Esophagus muscularis mucosa (tissue), 4 donors: ENCODE measurements at regions of chr3 and their contacts with region 1.

Region 1: GRCh38 chr3:61561374-61562041 is at the start of gene PTPRG:
- DNase-seq: peak; percentile 95
- H3K4me3 ChIP-seq: peak within 1 kb of the TSS; percentile 63 to 89 (median 86)
- H3K27ac ChIP-seq: peak within 1 kb of the TSS; percentile 90 to 96 (median 94)
- H3K4me1 ChIP-seq: peaks cover 18 to 39% (median 35%) of the 10 kb centered on the region in 4 donors
- H3K27me3 ChIP-seq: no peaks in the 10 kb centered on the region
- CTCF ChIP-seq: no peak
- EP300 ChIP-seq: no peak
- POLR2A ChIP-seq: no peak
- total RNA-seq, gene PTPRG: 51.9 to 56.8 (median 54.4) TPM

Region 2: GRCh38 chr3:60973316-60973715 is 588.2 kb before region 1 on chr3:
- intact Hi-C with region 1: no loop called
- DNase-seq: no peak
- H3K4me3 ChIP-seq: no peak overlapping the region
- H3K27ac ChIP-seq: no peak overlapping the region
- H3K4me1 ChIP-seq: no peaks in the 10 kb centered on the region
- H3K27me3 ChIP-seq: no peaks in the 10 kb centered on the region
- CTCF ChIP-seq: no peak
- EP300 ChIP-seq: no peak
- POLR2A ChIP-seq: no peak

Region 3: GRCh38 chr3:61251174-61251972 is 310.1 kb before region 1 on chr3 and contains the start of gene FHIT:
- intact Hi-C with region 1: loop called (anchors 10 kb)
- DNase-seq: peak; percentile 98
- H3K4me3 ChIP-seq: peak within 1 kb of the TSS; percentile 72 to 87 (median 77)
- H3K27ac ChIP-seq: peak within 1 kb of the TSS; percentile 65 to 80 (median 80)
- H3K4me1 ChIP-seq: peaks cover 12 to 19% (median 15%) of the 10 kb centered on the region in 4 donors
- H3K27me3 ChIP-seq: no peaks in the 10 kb centered on the region
- CTCF ChIP-seq: peak in 1 of 3 experiments; percentile 11
- EP300 ChIP-seq: no peak
- POLR2A ChIP-seq: no peak
- total RNA-seq, gene FHIT: 4.6 to 6.1 (median 5.7) TPM

Region 4: DNA sequence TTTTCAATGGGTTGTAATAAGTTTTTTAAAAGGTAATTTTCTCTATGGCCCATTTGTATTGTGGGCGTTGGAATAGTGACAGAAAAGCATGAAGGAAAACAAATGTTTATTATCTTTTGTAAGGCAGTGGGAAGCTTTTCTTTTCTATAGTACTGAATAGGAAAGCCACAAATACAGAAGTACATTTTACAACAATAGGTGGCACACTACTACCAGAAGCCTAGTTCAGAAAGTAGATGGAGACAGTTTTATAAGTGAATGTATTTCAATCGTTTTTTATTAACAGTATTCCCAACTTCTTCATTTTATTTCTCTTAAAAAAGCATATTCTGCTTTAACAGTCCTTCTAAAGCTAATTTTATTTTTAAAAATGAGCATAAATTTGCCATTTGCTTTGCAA is 296.5 kb after region 1 on chr3:
- intact Hi-C with region 1: loop called (anchors 10 kb)
- DNase-seq: no peak
- H3K4me3 ChIP-seq: no peak overlapping the region
- H3K27ac ChIP-seq: no peak overlapping the region
- H3K4me1 ChIP-seq: peaks cover 7 to 36% (median 16%) of the 10 kb centered on the region in 4 donors
- H3K27me3 ChIP-seq: no peaks in the 10 kb centered on the region
- CTCF ChIP-seq: peak; percentile 52 to 62 (median 54)
- EP300 ChIP-seq: no peak
- POLR2A ChIP-seq: no peak

Region 5: DNA sequence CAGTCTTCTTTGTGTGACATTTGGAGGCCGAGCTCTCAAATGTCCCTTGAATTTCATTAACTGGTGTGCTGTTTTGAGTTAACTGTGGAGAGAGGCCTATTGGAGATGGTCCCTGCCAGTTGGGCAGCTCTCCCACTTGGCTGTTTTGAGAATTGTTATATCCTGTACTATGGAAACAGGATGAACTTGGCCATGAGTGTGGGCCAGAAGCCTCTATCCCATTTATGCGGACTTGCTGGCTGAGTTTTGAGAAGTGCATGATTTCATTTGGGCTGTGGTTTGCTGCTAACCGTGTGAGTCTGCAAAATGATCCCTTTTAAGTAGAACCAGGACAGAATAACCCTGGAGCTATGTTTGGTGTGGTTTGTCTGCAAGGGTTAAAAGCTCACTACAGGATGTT is 365.8 kb after region 1 on chr3:
- intact Hi-C with region 1: loop called (anchors 10 kb)
- DNase-seq: peak; percentile 93
- H3K4me3 ChIP-seq: peak overlapping the region in 1 of 4 donors; percentile 6
- H3K27ac ChIP-seq: peak overlapping the region; percentile 69 to 76 (median 74)
- H3K4me1 ChIP-seq: peaks cover 52 to 70% (median 64%) of the 10 kb centered on the region in 4 donors
- H3K27me3 ChIP-seq: no peaks in the 10 kb centered on the region
- CTCF ChIP-seq: no peak
- EP300 ChIP-seq: no peak
- POLR2A ChIP-seq: no peak

Region 6: GRCh38 chr3:62188681-62189383 is 627.3 kb after region 1 on chr3:
- intact Hi-C with region 1: loop called (anchors 5 kb)
- DNase-seq: no peak
- H3K4me3 ChIP-seq: peak overlapping the region in 2 of 4 donors; percentile 14 to 29
- H3K27ac ChIP-seq: no peak overlapping the region
- H3K4me1 ChIP-seq: peaks cover 17 to 22% (median 19%) of the 10 kb centered on the region in 4 donors
- H3K27me3 ChIP-seq: no peaks in the 10 kb centered on the region
- CTCF ChIP-seq: peak; percentile 76 to 84 (median 80)
- EP300 ChIP-seq: no peak
- POLR2A ChIP-seq: no peak